ENCODE measurements at regions of chr17 and their contacts with region 1.

Region 1: GRCh38 chr17:74379495-74380085 is 12.3 kb downstream of the GPR142 start:
- DNase-seq: peak; percentile 96 to 97
- H3K4me3 ChIP-seq: peak overlapping the region; percentile 13 to 36 (median 20)
- H3K27ac ChIP-seq: peak overlapping the region; percentile 78 to 88 (median 86)
- H3K4me1 ChIP-seq: peaks cover 22 to 30% (median 28%) of the 10 kb centered on the region in 4 donors
- H3K27me3 ChIP-seq: peaks cover 0 to 6% (median 0%) of the 10 kb centered on the region in 3 donors
- CTCF ChIP-seq: peak in 5 of 7 experiments; percentile 89 to 97 (median 95)
- EP300 ChIP-seq: no peak
- POLR2A ChIP-seq: no peak

Region 2: GRCh38 chr17:74259667-74260524 is 119.7 kb before region 1 on chr17:
- intact Hi-C with region 1: no loop called
- DNase-seq: no peak
- H3K4me3 ChIP-seq: no peak overlapping the region
- H3K27ac ChIP-seq: no peak overlapping the region
- H3K4me1 ChIP-seq: no peaks in the 10 kb centered on the region
- H3K27me3 ChIP-seq: peaks cover 0 to 5% (median 0%) of the 10 kb centered on the region in 3 donors
- CTCF ChIP-seq: no peak
- EP300 ChIP-seq: no peak
- POLR2A ChIP-seq: no peak

Region 3: DNA sequence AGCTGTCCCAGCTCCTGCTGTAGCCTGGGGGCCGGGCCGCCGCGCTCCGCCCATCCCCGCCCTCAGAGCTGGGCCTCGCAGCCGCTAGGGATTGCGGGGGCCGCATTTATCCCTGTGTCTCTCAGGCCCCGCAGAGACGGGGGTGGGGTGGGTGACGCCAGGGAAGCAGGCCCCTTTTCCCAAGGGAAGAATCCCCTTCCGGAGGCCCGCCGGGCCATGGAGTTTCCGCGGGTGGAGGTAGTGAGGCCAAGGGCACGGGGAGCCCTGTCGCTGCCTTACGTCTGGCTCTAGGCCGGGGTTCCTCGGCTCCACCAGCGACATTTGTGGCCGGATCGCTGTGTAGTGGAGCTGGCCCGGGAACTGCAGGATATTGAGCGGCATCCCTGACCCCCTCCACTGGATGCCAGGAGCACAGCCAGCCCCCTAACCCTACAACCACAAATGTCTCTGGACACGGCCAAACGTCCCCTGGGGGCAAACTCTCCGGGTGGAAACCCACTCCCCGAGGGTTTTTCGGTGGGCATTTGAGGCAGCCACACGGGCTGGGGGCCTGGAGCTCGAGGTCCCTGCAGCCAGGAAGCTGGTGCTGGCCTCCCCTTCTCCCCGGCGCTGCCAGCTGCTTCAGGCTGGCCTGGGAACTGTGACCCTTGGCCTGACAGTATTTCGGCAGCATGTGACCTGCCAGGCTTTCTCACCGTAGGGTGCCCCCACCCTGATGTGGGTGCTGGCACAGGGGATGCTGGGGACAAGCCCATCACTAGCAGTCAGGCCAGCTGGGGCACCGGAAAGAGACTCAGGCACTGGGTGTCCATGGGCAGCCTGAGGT is 74.8 kb after region 1 on chr17:
- intact Hi-C with region 1: loop called (anchors 2 kb)
- DNase-seq: peak in 1 of 2 donors; percentile 97
- H3K4me3 ChIP-seq: peak overlapping the region; percentile 42 to 48 (median 46)
- H3K27ac ChIP-seq: peak overlapping the region; percentile 83 to 99 (median 90)
- H3K4me1 ChIP-seq: peaks cover 48 to 53% (median 51%) of the 10 kb centered on the region in 4 donors
- H3K27me3 ChIP-seq: no peaks in the 10 kb centered on the region
- CTCF ChIP-seq: peak in 4 of 7 experiments; percentile 13 to 46 (median 28)
- EP300 ChIP-seq: no peak
- POLR2A ChIP-seq: peak in 1 of 4 donors; percentile 11